CD4-positive, alpha-beta memory T cell (primary cell): ENCODE measurements at regions of chr3 and their contacts with region 1.

Region 1: DNA sequence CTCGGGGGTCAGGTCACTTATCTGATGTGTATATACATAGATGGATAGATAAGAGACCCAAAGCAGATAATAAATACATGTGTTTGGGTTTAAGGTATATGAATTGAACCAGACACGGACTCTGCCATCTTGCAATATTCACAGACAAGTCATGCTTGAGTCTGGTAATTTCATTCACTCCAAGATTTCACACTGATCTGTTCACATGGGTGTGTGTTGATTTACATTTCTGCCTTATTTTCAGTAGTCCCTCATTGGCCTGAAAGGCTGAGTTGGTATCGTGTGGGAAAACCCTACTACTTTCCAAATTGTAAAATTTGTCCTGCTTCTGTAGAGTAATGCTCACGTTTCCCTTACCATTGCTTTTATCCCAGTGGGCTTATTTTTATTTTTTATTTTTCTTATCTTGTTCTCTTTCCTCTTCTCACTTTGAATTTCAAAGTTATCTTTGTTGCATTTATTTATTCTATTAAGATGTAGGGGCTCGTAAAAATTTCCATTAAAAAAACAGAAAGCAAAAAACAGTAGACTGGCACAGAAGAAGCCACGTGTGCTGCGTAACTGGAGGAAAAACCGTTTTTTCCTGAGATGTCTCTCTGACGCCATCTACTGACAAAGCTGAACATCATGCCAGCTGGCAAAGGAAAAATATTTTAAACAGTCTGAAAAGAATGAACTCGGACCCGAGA is 10.8 kb upstream of the MFSD1 start:
- DNase-seq: peak; percentile 51 to 66 (median 59)
- H3K4me3 ChIP-seq: no peak overlapping the region
- H3K4me3 Mint-ChIP-seq: peak overlapping the region; percentile 58 to 83 (median 73)
- H3K27ac ChIP-seq: no peak overlapping the region
- H3K27ac Mint-ChIP-seq: peak overlapping the region in 1 of 7 donors; percentile 36
- H3K4me1 ChIP-seq: peaks cover 7% of the 10 kb centered on the region
- H3K4me1 Mint-ChIP-seq: peaks cover 0 to 4% (median 3%) of the 10 kb centered on the region in 4 donors
- H3K27me3 ChIP-seq: no peaks in the 10 kb centered on the region
- H3K27me3 Mint-ChIP-seq: no peaks in the 10 kb centered on the region

Region 2: DNA sequence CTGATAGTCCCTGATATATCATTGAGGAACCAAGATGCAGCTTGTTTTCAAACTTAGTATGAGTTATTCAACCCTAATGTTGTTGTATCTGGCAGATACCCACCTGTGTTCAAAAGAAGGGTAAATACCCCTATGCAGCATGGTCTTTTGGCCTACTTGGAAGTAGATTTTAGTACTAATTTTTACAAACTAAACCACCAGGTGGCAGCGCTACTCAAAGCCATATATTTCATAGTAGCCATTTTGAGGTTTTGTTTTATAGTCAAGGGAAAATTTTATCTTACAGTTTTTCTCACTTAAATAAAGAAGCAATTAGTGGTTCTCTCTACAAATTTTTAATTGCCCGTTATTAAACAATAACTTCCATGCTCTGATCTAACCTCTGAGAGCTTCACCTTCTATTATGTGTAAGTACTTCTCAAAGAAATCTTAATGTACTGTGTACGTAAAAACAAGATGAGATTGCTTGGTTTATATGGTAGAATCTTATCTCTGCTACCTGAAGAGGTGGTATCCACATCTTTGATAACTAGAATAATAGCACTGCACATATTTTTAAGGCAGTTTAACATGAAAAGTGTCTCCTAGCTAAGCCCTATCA is 251.5 kb before region 1 on chr3:
- CTCF ChIA-PET with region 1: interaction called, 15 read pairs
- POLR2A ChIA-PET with region 1: no interaction called
- intact Hi-C with region 1: loop called (anchors 1 kb)
- DNase-seq: peak in 4 of 5 donors; percentile 21 to 38 (median 34)
- H3K4me3 ChIP-seq: no peak overlapping the region
- H3K4me3 Mint-ChIP-seq: no peak overlapping the region
- H3K27ac ChIP-seq: no peak overlapping the region
- H3K27ac Mint-ChIP-seq: no peak overlapping the region
- H3K4me1 ChIP-seq: no peaks in the 10 kb centered on the region
- H3K4me1 Mint-ChIP-seq: peaks cover 0 to 1% (median 0%) of the 10 kb centered on the region in 4 donors
- H3K27me3 ChIP-seq: no peaks in the 10 kb centered on the region
- H3K27me3 Mint-ChIP-seq: no peaks in the 10 kb centered on the region

Region 3: DNA sequence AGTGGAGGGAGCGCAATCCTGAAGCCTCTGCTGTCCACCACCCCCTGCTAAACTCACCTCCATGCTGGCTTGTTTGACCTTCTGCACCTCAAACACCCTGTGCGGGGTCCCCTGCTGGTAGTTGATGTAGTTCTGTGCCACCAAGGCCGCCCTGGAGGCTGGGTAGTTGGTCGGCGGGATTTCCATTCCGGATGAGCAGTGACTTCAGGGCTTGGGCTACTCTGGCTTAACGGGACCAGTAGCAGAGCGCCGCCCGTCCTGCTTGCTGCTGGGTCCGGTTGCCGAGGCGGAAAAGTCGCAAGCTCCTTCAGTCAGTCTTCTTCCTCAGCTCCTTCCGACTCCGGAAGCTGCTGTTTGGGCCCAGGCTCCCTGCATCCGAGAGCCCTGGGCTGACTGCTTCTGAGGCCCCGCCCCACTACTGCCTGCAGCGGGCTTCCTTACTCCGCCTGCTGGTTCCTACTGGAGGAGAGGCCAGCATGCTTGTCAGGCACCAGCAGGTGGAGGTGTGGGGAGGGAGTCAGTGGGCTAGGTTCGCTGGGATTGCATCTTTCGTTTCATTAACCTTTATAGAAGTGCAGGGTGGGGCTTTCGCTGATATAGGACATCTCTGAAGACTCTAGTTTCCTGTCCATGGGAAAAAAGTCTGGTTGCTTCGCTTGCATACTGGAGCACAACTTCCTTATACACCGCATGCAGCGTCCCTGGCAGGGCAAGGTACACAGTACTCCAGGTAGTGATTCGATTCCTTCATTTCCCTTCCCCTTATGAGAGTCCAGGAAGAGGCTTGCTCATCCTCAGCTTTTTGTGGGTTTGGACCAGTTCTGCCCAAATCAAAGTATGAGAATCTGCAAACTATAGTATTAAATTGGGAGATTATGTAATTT is 118.5 kb before region 1 on chr3 and contains the start of gene LXN:
- CTCF ChIA-PET with region 1: interaction called, 10 read pairs
- POLR2A ChIA-PET with region 1: no interaction called
- intact Hi-C with region 1: loop called (anchors 5 kb)
- DNase-seq: peak; percentile 76 to 89 (median 79)
- H3K4me3 ChIP-seq: peak within 1 kb of the TSS; percentile 62 to 64
- H3K4me3 Mint-ChIP-seq: peak within 1 kb of the TSS; percentile 92 to 99 (median 96)
- H3K27ac ChIP-seq: peak within 1 kb of the TSS; percentile 63
- H3K27ac Mint-ChIP-seq: peak within 1 kb of the TSS; percentile 81 to 97 (median 96)
- H3K4me1 ChIP-seq: peaks cover 19% of the 10 kb centered on the region
- H3K4me1 Mint-ChIP-seq: peaks cover 12 to 32% (median 22%) of the 10 kb centered on the region in 4 donors
- H3K27me3 ChIP-seq: no peaks in the 10 kb centered on the region
- H3K27me3 Mint-ChIP-seq: no peaks in the 10 kb centered on the region
- total RNA-seq, gene LXN: 7.7 to 8.1 TPM

Region 4: DNA sequence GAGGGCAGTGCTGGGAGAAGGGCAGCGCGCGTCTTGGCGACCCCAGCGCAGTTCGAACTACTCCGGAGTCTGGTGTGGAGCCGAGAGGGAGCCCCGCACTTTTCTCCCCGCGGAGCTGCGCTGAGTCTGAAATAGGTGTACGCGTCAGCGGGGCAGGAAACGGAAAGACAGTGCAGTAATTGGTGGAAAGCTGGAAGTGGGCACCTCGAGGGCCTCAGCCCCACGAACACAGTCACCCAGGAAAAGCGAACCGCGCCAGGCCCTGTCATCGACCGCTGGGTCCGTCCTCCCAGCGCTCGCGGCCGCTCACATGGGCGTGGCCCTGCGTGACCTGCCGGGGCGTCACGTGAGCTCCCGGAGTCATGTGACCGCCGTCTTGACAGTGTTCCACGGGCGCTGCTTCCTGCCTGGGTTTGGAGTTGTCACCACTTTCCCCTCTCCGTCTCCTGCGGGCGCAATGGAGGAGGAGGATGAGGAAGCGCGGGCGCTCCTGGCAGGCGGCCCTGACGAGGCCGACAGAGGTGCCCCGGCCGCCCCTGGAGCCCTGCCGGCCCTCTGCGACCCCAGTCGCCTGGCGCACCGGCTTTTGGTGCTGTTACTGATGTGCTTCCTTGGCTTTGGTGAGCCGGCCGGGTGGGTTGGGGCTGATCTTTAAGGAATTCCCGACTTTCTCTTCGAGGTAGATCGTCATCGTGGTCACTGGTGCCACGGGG is 10.8 kb after region 1 on chr3 and contains the start of gene MFSD1:
- CTCF ChIA-PET with region 1: interaction called, 21 read pairs
- POLR2A ChIA-PET with region 1: interaction called, 6 read pairs
- intact Hi-C with region 1: no loop called
- DNase-seq: peak; percentile 86 to 92 (median 88)
- H3K4me3 ChIP-seq: peak within 1 kb of the TSS; percentile 68 to 98
- H3K4me3 Mint-ChIP-seq: peak within 1 kb of the TSS; percentile 89 to 93 (median 92)
- H3K27ac ChIP-seq: peak within 1 kb of the TSS; percentile 63
- H3K27ac Mint-ChIP-seq: peak within 1 kb of the TSS; percentile 71 to 97 (median 94)
- H3K4me1 ChIP-seq: peaks cover 36% of the 10 kb centered on the region
- H3K4me1 Mint-ChIP-seq: peaks cover 24 to 41% (median 35%) of the 10 kb centered on the region in 4 donors
- H3K27me3 ChIP-seq: no peaks in the 10 kb centered on the region
- H3K27me3 Mint-ChIP-seq: no peaks in the 10 kb centered on the region
- total RNA-seq, gene MFSD1: 31.7 to 33.7 TPM